ENCODE measurements at regions of chr1 and their contacts with region 1.

Region 1: GRCh38 chr1:27402349-27402754 is 9.9 kb downstream of the GPR3 start:
- DNase-seq: no peak
- H3K4me3 ChIP-seq: no peak overlapping the region
- H3K27ac ChIP-seq: peak overlapping the region; percentile 86
- H3K4me1 ChIP-seq: peaks cover 53% of the 10 kb centered on the region
- CTCF ChIP-seq: no peak

Region 2: GRCh38 chr1:26986658-26987057 is 415.7 kb before region 1 on chr1:
- CTCF ChIA-PET with region 1: no interaction called
- POLR2A ChIA-PET with region 1: no interaction called
- intact Hi-C with region 1: no loop called
- DNase-seq: no peak
- H3K4me3 ChIP-seq: no peak overlapping the region
- H3K27ac ChIP-seq: no peak overlapping the region
- H3K4me1 ChIP-seq: peaks cover 5% of the 10 kb centered on the region
- CTCF ChIP-seq: no peak

Region 3: GRCh38 chr1:27481994-27482620 is 79.8 kb after region 1 on chr1:
- CTCF ChIA-PET with region 1: no interaction called
- POLR2A ChIA-PET with region 1: interaction called, 3 read pairs
- intact Hi-C with region 1: loop called (anchors 1 kb)
- DNase-seq: no peak
- H3K4me3 ChIP-seq: peak overlapping the region; percentile 45
- H3K27ac ChIP-seq: peak overlapping the region; percentile 94
- H3K4me1 ChIP-seq: peaks cover 84% of the 10 kb centered on the region
- CTCF ChIP-seq: no peak

Region 4: DNA sequence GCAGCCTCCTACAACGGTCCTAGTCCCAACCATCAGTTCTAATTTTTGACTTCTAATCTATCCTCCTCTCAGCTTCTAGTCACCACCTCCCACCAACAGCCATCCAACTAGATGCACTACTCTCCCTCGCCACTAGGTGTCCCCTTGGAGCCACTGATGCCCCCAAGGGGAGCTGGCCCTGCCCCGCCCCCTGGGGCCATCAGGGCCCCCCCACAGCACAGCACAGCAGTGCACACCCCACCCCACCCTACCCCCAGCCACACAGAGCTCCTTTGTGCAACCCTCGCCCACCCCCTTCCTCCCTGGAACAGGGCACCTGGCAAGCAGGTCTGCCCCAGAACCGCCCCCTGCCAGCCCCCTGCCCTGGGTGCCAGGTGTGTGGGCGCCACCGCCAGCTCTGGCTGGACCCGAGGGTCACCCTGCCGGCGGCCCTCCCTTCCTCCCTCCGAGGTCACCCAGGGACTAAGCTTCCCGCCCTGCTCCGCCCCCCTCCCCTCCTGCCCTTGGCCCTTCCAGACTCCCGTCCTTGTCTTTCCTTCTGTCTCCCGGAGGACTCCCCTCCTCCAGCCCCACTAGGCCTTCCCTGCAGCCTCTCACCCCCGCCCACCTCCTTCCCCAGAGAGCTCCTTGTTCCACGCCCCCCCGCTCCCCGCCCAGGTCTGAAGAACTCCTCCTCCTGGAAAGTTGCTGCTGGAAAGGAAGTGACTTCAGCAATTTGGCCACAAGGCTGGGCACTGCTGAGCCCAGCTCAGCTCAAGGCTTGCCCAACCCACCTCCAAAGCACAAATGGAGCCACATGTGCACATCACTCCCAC is 154.6 kb after region 1 on chr1:
- CTCF ChIA-PET with region 1: no interaction called
- POLR2A ChIA-PET with region 1: no interaction called
- intact Hi-C with region 1: loop called (anchors 2 kb)
- DNase-seq: peak; percentile 77
- H3K4me3 ChIP-seq: peak overlapping the region; percentile 24
- H3K27ac ChIP-seq: peak overlapping the region; percentile 67
- H3K4me1 ChIP-seq: peaks cover 32% of the 10 kb centered on the region
- CTCF ChIP-seq: peak; percentile 89

Measured in OCI-LY7 (cell line).